HCT116 (cell line): ENCODE measurements at regions of chr18 and their contacts with region 1.

Region 1: DNA sequence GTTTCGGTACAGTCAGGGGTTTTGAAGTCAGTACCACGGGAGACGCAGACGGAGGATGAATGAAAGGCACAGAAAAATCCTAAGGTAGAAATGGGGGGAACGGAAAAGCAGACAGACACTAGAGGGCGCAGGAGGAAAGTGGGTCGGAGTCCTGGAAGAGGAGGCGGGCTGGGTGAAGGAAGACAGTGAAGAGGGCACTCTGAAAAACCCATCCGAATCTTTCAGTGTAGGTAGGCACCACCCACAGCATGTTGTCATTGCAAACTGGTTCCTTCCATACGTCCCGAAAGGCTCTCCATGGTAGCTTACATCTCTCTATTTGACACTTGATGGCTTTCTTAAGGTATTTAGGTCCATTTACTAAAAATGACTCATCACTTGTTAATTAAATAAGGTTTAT is 18.5 kb upstream of the ZNF236 start:
- DNase-seq: no peak
- ATAC-seq: peak; percentile 74
- H3K4me3 ChIP-seq: peak overlapping the region; percentile 10 to 50; a peak in 2 of 4 replicates
- H3K27ac ChIP-seq: no peak overlapping the region
- H3K4me1 ChIP-seq: peaks cover 13 to 32% of the 10 kb centered on the region in 2 experiments
- H3K27me3 ChIP-seq: no peaks in the 10 kb centered on the region
- CTCF ChIP-seq: peak; percentile 82 to 88 (median 84)
- POLR2A ChIP-seq: no peak
- RAD21 ChIP-seq: peak; percentile 80

Region 2: DNA sequence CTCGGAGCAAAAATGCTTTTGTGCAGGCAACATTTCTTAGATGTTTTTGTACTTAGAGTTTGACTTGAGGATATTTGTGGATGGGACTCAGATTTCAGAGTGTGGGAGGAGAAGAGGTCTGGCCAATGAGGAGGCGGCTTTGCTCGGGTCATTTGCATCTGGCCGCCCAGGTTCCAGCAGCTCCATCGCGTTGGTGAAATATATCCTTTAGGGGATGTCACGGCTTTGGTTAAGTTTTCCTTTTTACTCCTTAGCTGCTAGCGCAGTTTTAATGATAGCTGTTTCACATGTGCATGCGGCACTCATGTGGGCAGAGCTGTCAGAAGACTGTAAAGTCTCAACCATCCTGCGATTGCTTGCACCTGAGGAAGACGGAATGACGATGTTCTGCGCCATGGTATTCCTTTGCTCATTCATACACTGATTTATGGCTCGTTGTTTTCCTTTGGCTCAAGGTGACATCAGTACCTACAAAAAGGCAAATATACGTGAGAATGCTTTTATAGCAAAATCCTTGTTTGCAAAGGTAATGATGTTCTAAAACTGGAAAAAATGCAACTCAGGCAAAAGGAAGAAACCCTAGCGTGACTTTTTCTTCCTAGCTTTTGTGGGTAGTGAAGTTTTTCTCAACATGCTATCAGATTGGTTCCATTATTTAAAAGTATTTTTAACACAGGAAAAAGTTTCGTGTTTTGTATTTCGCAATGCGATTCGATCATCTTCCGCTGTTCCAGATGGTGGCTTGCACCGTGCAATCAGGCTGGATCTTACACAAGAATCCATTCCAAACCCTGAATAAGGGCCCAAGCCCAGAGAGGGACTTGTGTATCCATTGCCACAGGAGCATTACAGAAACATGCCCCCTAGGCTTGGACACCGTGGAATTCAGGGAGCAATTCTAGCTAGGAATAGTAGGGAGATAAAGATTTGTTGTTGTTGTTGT is 238.3 kb before region 1 on chr18:
- CTCF ChIA-PET with region 1: no interaction called
- POLR2A ChIA-PET with region 1: no interaction called
- RAD21 ChIA-PET with region 1: no interaction called
- intact Hi-C with region 1: no loop called
- DNase-seq: no peak
- ATAC-seq: peak; percentile 73
- H3K4me3 ChIP-seq: no peak overlapping the region
- H3K27ac ChIP-seq: no peak overlapping the region
- H3K4me1 ChIP-seq: peaks cover 15 to 25% of the 10 kb centered on the region in 2 experiments
- H3K27me3 ChIP-seq: no peaks in the 10 kb centered on the region
- CTCF ChIP-seq: no peak
- POLR2A ChIP-seq: no peak
- RAD21 ChIP-seq: no peak

Region 3: DNA sequence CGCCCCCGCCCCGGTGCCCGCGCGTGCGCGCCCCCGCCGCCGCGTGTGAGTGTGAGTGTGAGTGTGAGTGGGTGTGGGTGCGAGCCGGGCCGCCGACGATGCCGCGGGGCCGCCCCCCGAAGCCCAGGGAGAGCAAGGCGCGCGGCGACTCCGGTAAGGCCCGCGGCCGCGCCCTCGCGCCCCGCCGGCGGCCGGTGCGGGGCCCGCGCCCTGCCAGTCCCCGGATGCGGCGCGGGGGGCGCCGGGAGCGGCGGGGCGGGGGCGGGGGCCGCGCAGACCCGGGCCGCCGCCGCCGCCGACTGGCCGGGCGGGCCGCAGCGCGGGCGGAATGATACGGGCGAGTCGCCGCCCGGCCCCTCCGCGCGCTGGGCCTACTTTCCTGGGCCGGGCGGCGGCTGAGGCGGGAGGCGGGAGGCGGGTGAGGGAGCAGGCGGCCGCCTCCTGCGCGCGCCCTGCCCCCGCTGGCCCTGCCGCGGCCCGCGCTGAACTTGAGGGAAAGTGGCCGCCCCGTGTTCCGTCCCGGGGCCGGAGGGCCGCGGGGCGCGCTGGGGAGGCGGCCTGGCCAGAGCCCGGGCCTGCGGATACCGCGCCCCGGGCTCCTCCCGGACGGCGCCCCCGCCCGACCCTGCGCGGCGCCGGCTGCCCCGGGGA is 18.8 kb after region 1 on chr18 and contains the start of gene ZNF236:
- CTCF ChIA-PET with region 1: interaction called, 8 read pairs
- POLR2A ChIA-PET with region 1: no interaction called
- RAD21 ChIA-PET with region 1: interaction called in 1 of 2 experiments, 3 read pairs
- intact Hi-C with region 1: loop called (anchors 2 kb)
- DNase-seq: no peak
- ATAC-seq: peak; percentile 51
- H3K4me3 ChIP-seq: peak within 1 kb of the TSS; percentile 83 to 92
- H3K27ac ChIP-seq: peak within 1 kb of the TSS; percentile 97
- H3K4me1 ChIP-seq: peaks cover 11 to 40% of the 10 kb centered on the region in 2 experiments
- H3K27me3 ChIP-seq: no peaks in the 10 kb centered on the region
- CTCF ChIP-seq: no peak
- POLR2A ChIP-seq: peak; percentile 45
- RAD21 ChIP-seq: no peak
- total RNA-seq, gene ZNF236: 15.0 TPM

Region 4: GRCh38 chr18:76923485-76924085 is 119.8 kb after region 1 on chr18:
- CTCF ChIA-PET with region 1: no interaction called
- POLR2A ChIA-PET with region 1: no interaction called
- RAD21 ChIA-PET with region 1: no interaction called
- intact Hi-C with region 1: loop called (anchors 1 kb)
- DNase-seq: peak; percentile 34
- ATAC-seq: peak; percentile 87
- H3K4me3 ChIP-seq: no peak overlapping the region
- H3K27ac ChIP-seq: no peak overlapping the region
- H3K4me1 ChIP-seq: no peaks in the 10 kb centered on the region
- H3K27me3 ChIP-seq: no peaks in the 10 kb centered on the region
- CTCF ChIP-seq: peak in 2 of 3 experiments; percentile 89 to 91; a peak in 4 of 6 replicates
- POLR2A ChIP-seq: no peak
- RAD21 ChIP-seq: no peak

Region 5: GRCh38 chr18:76943542-76944339 is 139.9 kb after region 1 on chr18:
- CTCF ChIA-PET with region 1: no interaction called
- POLR2A ChIA-PET with region 1: no interaction called
- RAD21 ChIA-PET with region 1: no interaction called
- intact Hi-C with region 1: no loop called
- DNase-seq: no peak
- ATAC-seq: no peak
- H3K4me3 ChIP-seq: no peak overlapping the region
- H3K27ac ChIP-seq: no peak overlapping the region
- H3K4me1 ChIP-seq: no peaks in the 10 kb centered on the region
- H3K27me3 ChIP-seq: no peaks in the 10 kb centered on the region
- CTCF ChIP-seq: no peak
- POLR2A ChIP-seq: no peak
- RAD21 ChIP-seq: no peak

Region 6: DNA sequence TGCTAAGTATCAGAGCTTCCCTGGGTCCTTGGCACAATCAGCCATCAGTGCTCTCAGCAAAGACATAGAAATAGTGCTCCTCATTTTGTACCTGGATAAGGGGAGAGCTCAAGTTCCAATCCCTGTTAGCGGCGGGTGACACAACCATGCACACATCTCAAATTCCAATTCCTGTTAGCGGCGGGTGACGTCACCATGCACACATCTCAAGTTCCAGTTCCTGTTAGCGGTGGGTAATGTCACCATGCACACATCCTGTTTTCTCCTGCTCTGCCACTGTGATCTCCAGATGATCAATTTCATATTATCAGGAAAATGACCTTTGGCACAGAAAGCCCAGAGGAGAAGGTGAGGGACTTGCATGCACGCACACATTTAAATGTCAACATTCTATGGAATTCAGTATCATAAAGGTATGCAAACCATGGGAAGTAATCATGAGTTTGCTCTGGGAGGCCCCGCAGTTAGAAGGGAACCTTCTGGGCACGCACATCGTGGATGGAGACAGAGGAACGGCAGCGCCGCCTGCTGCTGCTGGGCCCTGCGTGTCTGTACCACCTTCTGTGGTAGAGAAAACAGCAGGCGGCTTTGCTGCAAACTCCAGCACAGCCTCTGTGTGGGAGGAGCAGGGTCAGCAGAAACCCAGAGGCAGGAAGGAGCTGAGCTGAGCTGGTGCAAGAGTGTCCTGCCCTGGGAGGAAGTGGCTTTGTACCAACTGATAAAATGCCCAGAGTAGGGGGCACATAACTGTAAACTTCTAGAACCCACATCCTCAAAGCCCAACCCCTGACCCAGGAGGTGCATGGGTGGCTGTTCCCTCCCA is 251.0 kb after region 1 on chr18:
- CTCF ChIA-PET with region 1: no interaction called
- POLR2A ChIA-PET with region 1: no interaction called
- RAD21 ChIA-PET with region 1: no interaction called
- intact Hi-C with region 1: loop called (anchors 2 kb)
- DNase-seq: no peak
- ATAC-seq: no peak
- H3K4me3 ChIP-seq: no peak overlapping the region
- H3K27ac ChIP-seq: no peak overlapping the region
- H3K4me1 ChIP-seq: peaks cover 0 to 5% of the 10 kb centered on the region in 2 experiments; a peak in 1 of 4 replicates
- H3K27me3 ChIP-seq: no peaks in the 10 kb centered on the region
- CTCF ChIP-seq: no peak
- POLR2A ChIP-seq: no peak
- RAD21 ChIP-seq: no peak